Activated CD8-positive, alpha-beta T cell treated with anti-CD3 and anti-CD28 coated beads, Interleukin-2, amount 10 ng/mL, durations not matched to agents 7 days and 5 days (primary cell): ENCODE measurements at regions of chr6 and their contacts with region 1.

Region 1: DNA sequence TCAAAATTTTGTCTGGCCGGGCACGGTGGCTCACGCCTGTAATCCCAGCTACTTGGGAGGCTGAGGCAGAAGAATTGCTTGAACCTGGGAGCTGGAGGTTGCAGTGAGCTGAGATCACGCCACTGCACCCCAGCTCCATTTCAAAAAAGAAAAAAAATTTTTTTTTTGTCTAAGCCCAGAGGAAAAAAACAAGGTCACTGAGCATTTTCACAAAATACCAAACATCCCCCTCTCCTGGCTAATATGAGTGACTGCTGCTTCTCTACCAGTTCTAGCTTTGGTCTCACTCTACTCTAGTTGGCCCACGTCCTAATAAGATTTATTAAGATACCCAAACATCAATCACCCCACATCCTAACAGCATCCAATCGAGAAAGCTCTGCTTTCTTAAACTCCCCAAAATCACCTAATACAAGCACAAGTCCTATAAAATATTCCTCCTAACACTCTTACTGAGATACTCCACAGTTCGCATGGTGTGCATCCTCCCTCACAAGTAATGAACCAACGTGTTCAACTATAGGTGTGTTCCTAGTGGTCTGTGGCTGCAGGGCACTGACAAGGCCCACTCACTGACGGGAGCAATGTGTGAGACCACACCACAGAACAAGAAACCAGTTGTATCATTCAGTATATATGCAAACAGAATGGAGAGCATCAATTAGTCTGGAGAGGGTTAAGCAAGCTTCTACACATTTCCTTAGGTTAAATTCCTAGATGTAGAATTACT is 64.2 kb downstream of the FKBP5 start:
- DNase-seq: no peak
- ATAC-seq: peak; percentile 55
- H3K4me3 Mint-ChIP-seq: no peak overlapping the region
- H3K27ac Mint-ChIP-seq: peak overlapping the region; percentile 73
- H3K4me1 Mint-ChIP-seq: peaks cover 22% of the 10 kb centered on the region
- H3K27me3 Mint-ChIP-seq: no peaks in the 10 kb centered on the region

Region 2: DNA sequence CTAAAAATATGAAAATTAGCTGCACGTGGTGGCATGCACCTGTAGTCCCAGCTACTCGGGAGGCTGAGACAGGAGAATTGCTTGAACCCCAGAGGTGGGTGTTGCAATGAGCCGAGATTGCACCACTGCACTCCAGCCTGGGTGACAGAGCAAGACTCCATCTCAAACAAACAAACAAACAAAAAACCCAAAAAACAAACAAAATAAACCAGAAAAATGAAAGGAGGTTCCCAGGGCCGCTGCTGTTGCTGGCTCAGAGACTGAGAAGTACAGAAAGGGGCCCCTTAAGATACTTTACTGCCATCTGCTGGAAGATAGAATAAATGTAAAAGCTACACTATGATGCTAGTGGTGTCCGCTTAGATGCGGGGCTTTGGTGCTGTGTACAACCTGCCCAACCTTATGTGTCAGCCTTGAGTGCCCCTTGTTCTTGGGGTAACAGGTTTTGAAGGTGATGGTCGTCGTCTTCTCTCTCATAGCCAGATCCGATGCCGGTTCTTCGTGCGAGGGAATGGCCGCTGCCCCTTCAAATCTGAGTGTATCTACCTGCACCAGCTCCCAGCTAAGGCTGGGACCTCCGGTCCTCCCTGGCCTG is 175.1 kb before region 1 on chr6:
- CTCF ChIA-PET with region 1: no interaction called
- POLR2A ChIA-PET with region 1: no interaction called
- DNase-seq: peak; percentile 61
- ATAC-seq: peak; percentile 65
- H3K4me3 Mint-ChIP-seq: no peak overlapping the region
- H3K27ac Mint-ChIP-seq: no peak overlapping the region
- H3K4me1 Mint-ChIP-seq: peaks cover 60% of the 10 kb centered on the region
- H3K27me3 Mint-ChIP-seq: peaks cover 4% of the 10 kb centered on the region

Region 3: GRCh38 chr6:35583893-35584688 is 40.4 kb before region 1 on chr6:
- CTCF ChIA-PET with region 1: interaction called, 98 read pairs
- POLR2A ChIA-PET with region 1: interaction called, 3 read pairs
- DNase-seq: peak; percentile 87
- ATAC-seq: peak; percentile 78
- H3K4me3 Mint-ChIP-seq: no peak overlapping the region
- H3K27ac Mint-ChIP-seq: no peak overlapping the region
- H3K4me1 Mint-ChIP-seq: peaks cover 18% of the 10 kb centered on the region
- H3K27me3 Mint-ChIP-seq: no peaks in the 10 kb centered on the region

Region 4: GRCh38 chr6:35590622-35591066 is 33.9 kb before region 1 on chr6:
- CTCF ChIA-PET with region 1: interaction called, 98 read pairs
- POLR2A ChIA-PET with region 1: no interaction called
- DNase-seq: no peak
- ATAC-seq: no peak
- H3K4me3 Mint-ChIP-seq: no peak overlapping the region
- H3K27ac Mint-ChIP-seq: no peak overlapping the region
- H3K4me1 Mint-ChIP-seq: peaks cover 46% of the 10 kb centered on the region
- H3K27me3 Mint-ChIP-seq: no peaks in the 10 kb centered on the region

Region 5: DNA sequence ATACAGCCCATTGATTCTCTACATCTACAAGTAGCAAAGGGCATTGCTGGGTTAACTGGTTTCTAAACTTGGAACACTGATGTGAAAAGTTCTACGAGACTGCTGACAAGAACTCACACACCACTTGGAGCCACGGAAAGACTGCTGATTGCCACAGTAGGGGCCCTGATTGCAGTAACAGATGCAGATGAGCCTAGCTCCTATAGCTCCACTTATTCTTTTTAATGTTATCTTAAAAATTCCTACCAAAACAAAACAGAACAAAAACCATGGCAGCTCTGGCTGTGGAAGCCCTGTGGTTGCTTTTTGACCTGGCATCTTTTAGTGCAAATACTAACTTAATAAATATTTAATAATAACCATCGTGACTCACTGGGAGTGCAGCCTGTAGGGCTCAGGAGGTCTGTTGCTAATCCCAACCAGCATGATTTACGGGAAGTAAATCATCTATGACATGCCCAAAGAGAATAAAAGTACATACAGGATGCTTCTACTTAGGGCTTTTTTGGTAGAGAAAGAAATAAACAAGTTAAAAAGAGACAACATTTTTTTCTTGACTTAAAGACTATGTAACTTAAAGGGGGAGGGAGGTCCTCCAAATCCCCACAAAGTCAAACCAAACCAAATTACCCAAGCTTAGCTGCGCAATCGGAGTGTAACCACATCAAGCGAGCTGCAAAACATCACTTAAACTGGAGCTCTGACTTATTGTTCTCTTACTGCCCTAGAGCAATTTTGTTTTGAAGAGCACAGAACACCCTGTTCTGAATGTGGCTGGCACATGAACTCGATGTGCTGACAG is 23.0 kb before region 1 on chr6:
- CTCF ChIA-PET with region 1: interaction called, 62 read pairs
- POLR2A ChIA-PET with region 1: interaction called, 3 read pairs
- DNase-seq: peak; percentile 82
- ATAC-seq: peak; percentile 84
- H3K4me3 Mint-ChIP-seq: peak overlapping the region; percentile 64
- H3K27ac Mint-ChIP-seq: peak overlapping the region; percentile 86
- H3K4me1 Mint-ChIP-seq: peaks cover 67% of the 10 kb centered on the region
- H3K27me3 Mint-ChIP-seq: no peaks in the 10 kb centered on the region

Region 6: DNA sequence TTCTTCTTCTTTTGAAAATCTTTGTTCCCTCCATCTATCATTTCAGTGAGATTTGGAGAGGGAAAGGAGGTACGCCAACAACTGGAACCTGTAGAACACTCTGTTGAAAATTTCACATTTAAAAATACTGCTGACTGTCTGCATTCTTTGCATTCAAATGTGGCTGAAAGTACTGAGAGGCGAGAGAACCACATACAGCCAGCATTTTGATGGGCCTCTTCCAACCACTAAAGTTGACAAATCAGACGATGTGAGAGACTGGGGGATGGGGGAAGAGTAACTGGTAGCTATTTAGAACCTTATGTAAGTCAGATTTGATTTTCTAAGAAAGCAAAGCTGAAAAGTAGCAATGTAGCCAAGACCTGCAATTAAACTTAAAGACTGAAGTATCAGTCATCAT is 13.3 kb before region 1 on chr6:
- CTCF ChIA-PET with region 1: interaction called, 62 read pairs
- POLR2A ChIA-PET with region 1: interaction called, 4 read pairs
- DNase-seq: peak; percentile 44
- ATAC-seq: peak; percentile 79
- H3K4me3 Mint-ChIP-seq: peak overlapping the region; percentile 42
- H3K27ac Mint-ChIP-seq: peak overlapping the region; percentile 76
- H3K4me1 Mint-ChIP-seq: peaks cover 38% of the 10 kb centered on the region
- H3K27me3 Mint-ChIP-seq: no peaks in the 10 kb centered on the region

Region 7: DNA sequence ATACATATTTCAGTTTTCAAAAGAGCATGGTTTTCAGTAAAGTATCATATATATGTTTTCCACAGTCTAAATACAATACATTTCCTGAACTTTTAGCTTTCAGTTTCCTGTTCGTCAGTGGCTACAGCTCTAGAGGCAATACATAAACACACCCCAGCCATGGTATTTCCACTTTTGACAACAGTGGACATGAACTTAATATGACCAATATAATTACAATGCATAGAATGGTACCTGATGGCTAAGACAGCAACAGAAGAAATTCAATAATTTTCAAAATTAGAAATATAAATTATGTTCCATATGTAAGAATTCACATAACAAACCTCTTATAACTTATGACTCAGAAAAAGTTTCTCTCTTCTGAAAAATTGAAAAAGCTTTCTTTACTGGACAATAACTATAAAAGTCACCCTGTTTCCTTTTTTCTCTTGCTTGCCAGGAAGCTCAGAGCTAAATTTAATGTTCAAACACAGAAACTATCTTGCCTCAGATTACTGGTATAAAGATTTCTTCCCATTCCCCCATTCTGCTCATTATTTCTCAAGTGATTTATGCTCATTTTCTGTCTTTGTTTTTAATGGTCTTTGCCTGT is 45.0 kb after region 1 on chr6:
- CTCF ChIA-PET with region 1: interaction called, 10 read pairs
- POLR2A ChIA-PET with region 1: no interaction called
- DNase-seq: no peak
- ATAC-seq: peak; percentile 72
- H3K4me3 Mint-ChIP-seq: peak overlapping the region; percentile 71
- H3K27ac Mint-ChIP-seq: peak overlapping the region; percentile 72
- H3K4me1 Mint-ChIP-seq: peaks cover 59% of the 10 kb centered on the region
- H3K27me3 Mint-ChIP-seq: no peaks in the 10 kb centered on the region

Region 8: GRCh38 chr6:36216559-36216958 is 592.1 kb after region 1 on chr6:
- CTCF ChIA-PET with region 1: no interaction called
- POLR2A ChIA-PET with region 1: no interaction called
- DNase-seq: no peak
- ATAC-seq: no peak
- H3K4me3 Mint-ChIP-seq: no peak overlapping the region
- H3K27ac Mint-ChIP-seq: no peak overlapping the region
- H3K4me1 Mint-ChIP-seq: no peaks in the 10 kb centered on the region
- H3K27me3 Mint-ChIP-seq: no peaks in the 10 kb centered on the region